Aorta (tissue), 5 donors: ENCODE measurements at regions of chr11 and their contacts with region 1.

Region 1: GRCh38 chr11:86515297-86516094 is 140.8 kb downstream of the CCDC81 start:
- DNase-seq: no peak
- ATAC-seq: peak; percentile 55
- H3K4me3 ChIP-seq: no peak overlapping the region
- H3K27ac ChIP-seq: peak overlapping the region in 1 of 2 donors; percentile 5
- H3K4me1 ChIP-seq: peaks cover 7 to 20% of the 10 kb centered on the region in 2 donors
- H3K27me3 ChIP-seq: no peaks in the 10 kb centered on the region

Region 2: GRCh38 chr11:86355256-86355655 is 160.2 kb before region 1 on chr11:
- intact Hi-C with region 1: no loop called
- DNase-seq: no peak
- ATAC-seq: no peak
- H3K4me3 ChIP-seq: no peak overlapping the region
- H3K27ac ChIP-seq: no peak overlapping the region
- H3K4me1 ChIP-seq: no peaks in the 10 kb centered on the region
- H3K27me3 ChIP-seq: no peaks in the 10 kb centered on the region

Region 3: DNA sequence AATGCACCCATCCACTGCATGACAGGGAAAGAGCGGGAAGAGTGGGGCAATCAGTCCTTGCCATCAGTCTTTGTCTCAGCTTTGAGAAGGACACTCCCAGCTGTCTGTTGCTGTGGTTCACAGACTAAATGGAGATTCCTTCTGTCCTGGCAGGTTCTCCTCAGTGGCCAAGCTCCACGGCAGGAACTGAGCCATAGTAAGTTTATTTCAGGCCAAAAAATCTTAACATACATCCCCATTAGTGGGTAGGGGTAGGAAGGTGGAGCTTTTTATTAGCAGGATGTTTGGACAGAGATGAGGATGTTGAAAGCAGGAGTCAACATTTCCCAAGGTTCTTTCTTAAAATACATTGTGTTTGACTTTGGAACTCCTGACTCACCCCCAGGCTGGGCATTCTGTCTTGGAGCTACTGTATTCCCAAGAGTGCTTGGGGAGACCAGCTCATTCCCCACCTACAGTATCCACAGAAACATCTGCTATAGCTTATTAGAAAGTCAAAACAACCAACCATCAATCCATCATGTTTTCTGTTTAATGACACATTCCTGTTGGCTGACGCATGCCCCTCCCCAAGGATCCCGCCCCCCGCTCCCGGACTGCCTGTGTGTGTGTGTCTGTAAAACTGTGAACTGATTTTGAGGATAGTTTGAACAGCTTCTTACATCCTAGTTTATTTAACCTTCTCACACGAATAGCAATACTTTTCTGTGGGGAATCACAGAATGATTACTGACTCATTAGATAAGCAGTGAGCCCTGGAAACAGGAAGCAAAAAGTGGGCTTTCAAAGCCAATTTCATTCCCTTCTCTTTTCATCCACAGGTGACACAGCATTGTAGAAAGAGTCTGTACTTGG is 31.3 kb before region 1 on chr11:
- intact Hi-C with region 1: loop called (anchors 5 kb)
- DNase-seq: peak; percentile 82 to 89
- ATAC-seq: peak; percentile 84
- H3K4me3 ChIP-seq: no peak overlapping the region
- H3K27ac ChIP-seq: peak overlapping the region; percentile 44 to 64
- H3K4me1 ChIP-seq: peaks cover 2 to 8% of the 10 kb centered on the region in 2 donors
- H3K27me3 ChIP-seq: no peaks in the 10 kb centered on the region

Region 4: GRCh38 chr11:86577663-86578636 is 62.5 kb after region 1 on chr11:
- intact Hi-C with region 1: loop called in 1 of 2 experiments (anchors 5 kb)
- DNase-seq: peak; percentile 73 to 85
- ATAC-seq: peak; percentile 90
- H3K4me3 ChIP-seq: peak overlapping the region in 1 of 2 donors; percentile 18
- H3K27ac ChIP-seq: peak overlapping the region in 1 of 2 donors; percentile 47
- H3K4me1 ChIP-seq: peaks cover 0 to 2% of the 10 kb centered on the region in 2 donors
- H3K27me3 ChIP-seq: no peaks in the 10 kb centered on the region